PC-9 (cell line): ENCODE measurements at regions of chr12 and their contacts with region 1.

Region 1: GRCh38 chr12:121209624-121210572 is at the start of gene P2RX4:
- DNase-seq: peak; percentile 56 to 82
- H3K4me3 ChIP-seq: peak within 1 kb of the TSS; percentile 70
- H3K27ac ChIP-seq: peak within 1 kb of the TSS; percentile 75
- H3K4me1 ChIP-seq: peaks cover 29% of the 10 kb centered on the region
- H3K27me3 ChIP-seq: no peaks in the 10 kb centered on the region
- CTCF ChIP-seq: peak; percentile 48; the same call in 1 of the 2 replicates
- total RNA-seq, gene P2RX4: 21.0 and 28.1 TPM in 2 replicates

Region 2: DNA sequence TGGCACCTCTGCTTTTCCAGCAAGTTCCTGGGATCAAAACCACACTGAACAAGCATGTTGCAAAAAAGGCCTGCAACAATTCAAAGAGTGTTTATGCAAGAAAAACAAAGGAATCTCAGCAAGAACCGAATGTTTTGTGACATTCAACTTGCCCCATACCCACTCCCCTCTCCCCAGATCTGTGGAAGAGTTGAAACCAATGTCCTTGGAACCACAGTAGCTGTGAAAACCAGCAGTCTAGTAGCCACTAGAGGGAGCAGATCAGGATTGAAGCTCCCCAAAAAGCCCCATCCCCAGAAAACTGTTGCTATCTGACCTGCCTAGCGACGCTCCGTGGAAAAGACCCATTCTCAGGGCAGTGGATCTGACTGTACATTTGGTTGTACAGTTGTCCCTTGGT is 1514.9 kb before region 1 on chr12:
- CTCF ChIA-PET with region 1: no interaction called
- POLR2A ChIA-PET with region 1: no interaction called
- intact Hi-C with region 1: no loop called
- DNase-seq: no peak
- H3K4me3 ChIP-seq: no peak overlapping the region
- H3K27ac ChIP-seq: no peak overlapping the region
- H3K4me1 ChIP-seq: no peaks in the 10 kb centered on the region
- H3K27me3 ChIP-seq: no peaks in the 10 kb centered on the region
- CTCF ChIP-seq: peak; percentile 41

Region 3: GRCh38 chr12:121124402-121125098 is 85.3 kb before region 1 on chr12:
- CTCF ChIA-PET with region 1: no interaction called
- POLR2A ChIA-PET with region 1: interaction called, 9 read pairs
- intact Hi-C with region 1: loop called (anchors 2 kb)
- DNase-seq: peak; percentile 83 to 99
- H3K4me3 ChIP-seq: no peak overlapping the region
- H3K27ac ChIP-seq: peak overlapping the region; percentile 70
- H3K4me1 ChIP-seq: peaks cover 18% of the 10 kb centered on the region
- H3K27me3 ChIP-seq: no peaks in the 10 kb centered on the region
- CTCF ChIP-seq: no peak

Region 4: GRCh38 chr12:121132601-121133481 is 77.1 kb before region 1 on chr12 and contains the start of gene P2RX7:
- CTCF ChIA-PET with region 1: no interaction called
- POLR2A ChIA-PET with region 1: no interaction called
- intact Hi-C with region 1: loop called (anchors 1 kb)
- DNase-seq: peak; percentile 90 to 91
- H3K4me3 ChIP-seq: peak within 1 kb of the TSS; percentile 34; the same call in 1 of the 2 replicates
- H3K27ac ChIP-seq: peak within 1 kb of the TSS; percentile 53
- H3K4me1 ChIP-seq: peaks cover 22% of the 10 kb centered on the region
- H3K27me3 ChIP-seq: no peaks in the 10 kb centered on the region
- CTCF ChIP-seq: no peak
- total RNA-seq, gene P2RX7: 2.2 and 3.2 TPM in 2 replicates

Region 5: GRCh38 chr12:122730215-122731014 is 1520.5 kb after region 1 on chr12 and contains the start of gene HCAR1:
- CTCF ChIA-PET with region 1: no interaction called
- POLR2A ChIA-PET with region 1: no interaction called
- intact Hi-C with region 1: no loop called
- DNase-seq: peak; percentile 23 to 58
- H3K4me3 ChIP-seq: peak within 1 kb of the TSS; percentile 77
- H3K27ac ChIP-seq: peak within 1 kb of the TSS; percentile 61
- H3K4me1 ChIP-seq: peaks cover 37% of the 10 kb centered on the region
- H3K27me3 ChIP-seq: no peaks in the 10 kb centered on the region
- CTCF ChIP-seq: no peak
- total RNA-seq, gene HCAR1: 4.2 and 5.2 TPM in 2 replicates